ENCODE measurements at regions of chr2 and their contacts with region 1.

Region 1: DNA sequence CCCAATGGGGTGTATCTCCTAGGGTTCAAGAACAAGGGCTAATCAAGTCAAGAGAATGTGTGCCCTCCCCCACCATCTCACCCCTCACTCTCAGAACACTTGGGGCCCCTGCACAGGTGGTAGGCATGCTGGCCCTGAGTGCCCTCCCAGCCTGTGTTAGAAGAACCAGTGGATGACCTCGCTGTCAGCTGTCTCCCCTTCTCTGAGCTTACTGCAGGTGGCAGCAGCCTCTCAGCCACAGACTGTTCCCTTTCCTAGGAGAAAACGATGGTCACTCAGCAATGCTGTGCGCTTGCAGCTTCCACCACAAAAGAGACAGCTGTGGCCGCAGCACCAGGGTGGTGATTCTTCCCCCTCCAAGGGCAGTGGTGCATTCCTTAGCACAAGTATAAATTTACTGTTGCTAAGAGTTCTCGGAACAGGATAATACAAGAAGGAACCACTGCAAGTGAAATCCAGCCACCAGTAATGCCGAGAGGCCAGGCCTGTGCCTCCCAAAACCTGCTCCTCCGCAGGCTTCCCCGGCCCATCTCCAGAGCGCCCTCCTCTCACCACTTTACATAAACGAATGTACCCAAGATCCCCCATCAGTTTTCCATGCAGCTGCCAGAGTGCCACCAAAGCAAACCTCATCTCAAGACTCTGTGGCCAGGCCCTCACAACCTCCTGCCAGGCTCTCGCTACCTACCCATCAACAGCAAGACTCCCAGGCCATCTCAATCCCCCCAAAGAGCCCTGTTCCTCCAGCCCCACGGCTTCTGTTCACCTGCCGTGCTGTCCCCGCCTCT is 935 bp upstream of the RAMP1 start:
- DNase-seq: peak; percentile 69 to 71
- H3K4me3 ChIP-seq: no peak overlapping the region
- H3K27ac ChIP-seq: no peak overlapping the region
- H3K4me1 ChIP-seq: peaks cover 6 to 16% of the 10 kb centered on the region in 2 donors
- H3K27me3 ChIP-seq: no peaks in the 10 kb centered on the region
- CTCF ChIP-seq: peak; percentile 24 to 85 (median 76)
- POLR2A ChIP-seq: no peak

Region 2: DNA sequence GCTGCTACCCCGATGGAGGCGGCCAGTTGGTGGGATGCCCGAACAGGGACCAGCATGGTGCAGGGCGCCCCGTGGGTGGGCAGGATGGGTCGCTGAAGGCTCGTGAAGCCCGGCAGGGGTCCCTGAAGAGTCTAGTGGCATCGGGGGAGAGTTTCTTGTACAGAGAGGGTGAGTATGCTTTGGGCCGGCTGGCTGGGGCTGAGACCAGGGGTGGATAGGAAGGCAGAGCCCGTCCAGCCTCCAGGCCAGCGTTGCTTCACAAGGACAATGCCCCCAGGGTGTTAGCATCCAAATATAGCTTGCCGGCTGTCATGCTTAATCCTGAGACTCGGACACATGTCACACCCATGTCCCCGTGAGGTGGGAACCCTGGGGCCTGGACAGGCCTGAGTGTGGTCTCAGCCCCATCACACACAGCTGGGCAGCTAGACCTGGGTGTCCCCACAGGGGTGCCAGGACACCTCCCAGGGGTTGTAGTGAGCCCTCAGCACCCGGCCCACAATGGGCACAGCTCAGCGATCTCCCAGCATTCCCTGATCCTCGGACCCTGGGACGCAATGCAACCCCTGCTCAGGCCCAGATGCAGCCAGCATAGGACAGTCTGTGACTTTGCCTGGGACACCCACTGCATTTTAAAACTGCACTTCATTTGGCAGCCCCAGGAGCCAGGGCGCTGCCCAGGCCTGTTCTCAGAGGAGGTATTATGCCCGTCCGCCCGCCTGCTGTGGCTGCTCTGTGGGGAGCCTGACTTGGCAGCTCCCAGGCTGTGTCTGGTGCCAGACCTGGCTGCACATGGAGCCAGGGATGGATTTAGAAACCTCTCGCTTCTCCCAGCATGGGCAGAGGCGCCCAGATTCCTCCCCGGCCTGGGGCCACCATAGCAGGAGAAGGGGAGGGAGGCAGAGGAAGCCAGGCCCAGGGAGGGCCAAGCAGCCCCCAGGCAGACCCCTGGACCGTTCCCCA is 37.3 kb after region 1 on chr2:
- intact Hi-C with region 1: no loop called
- DNase-seq: peak; percentile 79 to 86
- H3K4me3 ChIP-seq: no peak overlapping the region
- H3K27ac ChIP-seq: peak overlapping the region in 2 of 3 donors; percentile 30 to 54
- H3K4me1 ChIP-seq: peaks cover 6 to 28% of the 10 kb centered on the region in 2 donors
- H3K27me3 ChIP-seq: no peaks in the 10 kb centered on the region
- CTCF ChIP-seq: no peak
- POLR2A ChIP-seq: no peak

Region 3: GRCh38 chr2:238263204-238264071 is 404.9 kb after region 1 on chr2:
- intact Hi-C with region 1: loop called (anchors 5 kb)
- DNase-seq: peak; percentile 93 to 95
- H3K4me3 ChIP-seq: no peak overlapping the region
- H3K27ac ChIP-seq: peak overlapping the region in 2 of 3 donors; percentile 52 to 76
- H3K4me1 ChIP-seq: peaks cover 25 to 49% of the 10 kb centered on the region in 2 donors
- H3K27me3 ChIP-seq: no peaks in the 10 kb centered on the region
- CTCF ChIP-seq: peak; percentile 33 to 92 (median 77)
- POLR2A ChIP-seq: no peak

Measured in thyroid gland (tissue), 4 donors.